Activated CD4-positive, alpha-beta memory T cell treated with anti-CD3 and anti-CD28 coated beads for 36 hours (primary cell): ENCODE measurements at regions of chr1 and their contacts with region 1.

Region 1: GRCh38 chr1:23825076-23825761 is at the start of gene HMGCL:
- DNase-seq: peak; percentile 94
- H3K4me3 Mint-ChIP-seq: peak within 1 kb of the TSS; percentile 97
- H3K27ac Mint-ChIP-seq: peak within 1 kb of the TSS; percentile 95
- H3K4me1 Mint-ChIP-seq: peaks cover 17% of the 10 kb centered on the region
- H3K27me3 Mint-ChIP-seq: no peaks in the 10 kb centered on the region
- total RNA-seq, gene HMGCL: 34.2 to 35.3 TPM

Region 2: DNA sequence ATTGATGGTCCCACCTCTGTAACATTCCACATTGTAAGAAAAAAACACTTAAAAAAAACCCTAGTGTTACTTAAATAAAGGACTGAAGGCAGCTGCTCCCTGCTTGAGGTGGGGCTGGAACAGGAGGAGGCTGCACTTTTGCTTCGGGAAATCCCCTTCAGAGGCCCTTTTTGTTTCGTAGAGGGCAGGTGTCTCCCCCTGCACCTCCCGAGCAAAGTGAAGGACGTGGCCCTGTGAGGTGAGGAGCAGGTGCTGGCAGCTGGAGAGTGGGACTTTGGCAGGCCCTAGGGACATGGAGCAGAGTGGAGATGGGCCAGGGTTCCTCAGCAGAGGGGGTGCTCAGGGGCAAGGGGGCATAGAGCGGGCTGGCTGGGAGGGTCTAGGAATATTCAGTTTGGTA is 1649.0 kb before region 1 on chr1:
- CTCF ChIA-PET with region 1: no interaction called
- POLR2A ChIA-PET with region 1: no interaction called
- intact Hi-C with region 1: no loop called
- DNase-seq: peak; percentile 49
- H3K4me3 Mint-ChIP-seq: no peak overlapping the region
- H3K27ac Mint-ChIP-seq: no peak overlapping the region
- H3K4me1 Mint-ChIP-seq: peaks cover 13% of the 10 kb centered on the region
- H3K27me3 Mint-ChIP-seq: no peaks in the 10 kb centered on the region

Region 3: DNA sequence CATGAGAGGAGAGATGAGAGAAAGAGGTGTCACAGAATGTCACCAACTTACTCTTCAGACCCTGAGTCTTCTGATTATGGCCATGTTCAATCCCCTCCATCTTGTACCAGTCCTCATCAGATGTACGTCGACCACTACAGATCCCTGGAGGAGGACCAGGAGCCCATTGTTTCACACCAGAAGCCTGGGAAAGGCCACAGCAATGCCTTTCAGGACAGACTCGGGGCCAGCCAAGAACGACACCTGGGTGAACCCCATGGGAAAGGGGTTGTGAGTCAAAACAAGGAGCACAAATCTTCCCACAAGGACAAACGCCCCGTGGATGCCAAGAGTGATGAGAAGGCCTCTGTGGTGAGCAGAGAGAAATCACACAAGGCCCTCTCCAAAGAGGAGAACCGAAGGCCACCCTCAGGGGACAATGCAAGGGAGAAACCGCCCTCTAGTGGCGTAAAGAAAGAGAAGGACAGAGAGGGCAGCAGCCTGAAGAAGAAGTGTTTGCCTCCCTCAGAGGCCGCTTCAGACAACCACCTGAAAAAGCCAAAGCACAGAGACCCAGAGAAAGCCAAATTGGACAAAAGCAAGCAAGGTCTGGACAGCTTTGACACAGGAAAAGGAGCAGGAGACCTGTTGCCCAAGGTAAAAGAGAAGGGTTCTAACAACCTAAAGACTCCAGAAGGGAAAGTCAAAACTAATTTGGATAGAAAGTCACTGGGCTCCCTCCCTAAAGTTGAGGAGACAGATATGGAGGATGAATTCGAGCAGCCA is 74.0 kb before region 1 on chr1:
- CTCF ChIA-PET with region 1: no interaction called
- POLR2A ChIA-PET with region 1: no interaction called
- intact Hi-C with region 1: no loop called
- DNase-seq: peak; percentile 50
- H3K4me3 Mint-ChIP-seq: no peak overlapping the region
- H3K27ac Mint-ChIP-seq: no peak overlapping the region
- H3K4me1 Mint-ChIP-seq: peaks cover 28% of the 10 kb centered on the region
- H3K27me3 Mint-ChIP-seq: no peaks in the 10 kb centered on the region

Region 4: GRCh38 chr1:23838401-23838866 is 13.2 kb after region 1 on chr1:
- CTCF ChIA-PET with region 1: no interaction called
- POLR2A ChIA-PET with region 1: interaction called, 4 read pairs
- intact Hi-C with region 1: loop called (anchors 1 kb)
- DNase-seq: peak; percentile 79
- H3K4me3 Mint-ChIP-seq: peak overlapping the region; percentile 60
- H3K27ac Mint-ChIP-seq: no peak overlapping the region
- H3K4me1 Mint-ChIP-seq: peaks cover 8% of the 10 kb centered on the region
- H3K27me3 Mint-ChIP-seq: peaks cover 6% of the 10 kb centered on the region

Region 5: GRCh38 chr1:23867953-23868556 is 42.8 kb after region 1 on chr1 and contains the start of gene FUCA1:
- CTCF ChIA-PET with region 1: no interaction called
- POLR2A ChIA-PET with region 1: interaction called, 6 read pairs
- intact Hi-C with region 1: loop called (anchors 1 kb)
- DNase-seq: peak; percentile 95
- H3K4me3 Mint-ChIP-seq: peak within 1 kb of the TSS; percentile 77
- H3K27ac Mint-ChIP-seq: no peak within 1 kb of the TSS
- H3K4me1 Mint-ChIP-seq: peaks cover 19% of the 10 kb centered on the region
- H3K27me3 Mint-ChIP-seq: peaks cover 1% of the 10 kb centered on the region
- total RNA-seq, gene FUCA1: 5.3 to 5.4 TPM